ENCODE measurements at regions of chr17 and their contacts with region 1.

Region 1: GRCh38 chr17:7219812-7220581 is at the starts of genes ACADVL and DLG4:
- DNase-seq: peak; percentile 90
- H3K4me3 Mint-ChIP-seq: peak within 1 kb of the TSS; percentile 90
- H3K27ac Mint-ChIP-seq: peak within 1 kb of the TSS; percentile 92
- H3K4me1 Mint-ChIP-seq: peaks cover 53% of the 10 kb centered on the region
- H3K27me3 Mint-ChIP-seq: no peaks in the 10 kb centered on the region
- total RNA-seq, gene ACADVL: 332 to 340 TPM
- total RNA-seq, gene DLG4: 7.9 to 8.4 TPM

Region 2: GRCh38 chr17:7128160-7128559 is 91.8 kb before region 1 on chr17:
- CTCF ChIA-PET with region 1: no interaction called
- POLR2A ChIA-PET with region 1: no interaction called
- intact Hi-C with region 1: no loop called
- DNase-seq: no peak
- H3K4me3 Mint-ChIP-seq: no peak overlapping the region
- H3K27ac Mint-ChIP-seq: no peak overlapping the region
- H3K4me1 Mint-ChIP-seq: peaks cover 15% of the 10 kb centered on the region
- H3K27me3 Mint-ChIP-seq: no peaks in the 10 kb centered on the region

Region 3: DNA sequence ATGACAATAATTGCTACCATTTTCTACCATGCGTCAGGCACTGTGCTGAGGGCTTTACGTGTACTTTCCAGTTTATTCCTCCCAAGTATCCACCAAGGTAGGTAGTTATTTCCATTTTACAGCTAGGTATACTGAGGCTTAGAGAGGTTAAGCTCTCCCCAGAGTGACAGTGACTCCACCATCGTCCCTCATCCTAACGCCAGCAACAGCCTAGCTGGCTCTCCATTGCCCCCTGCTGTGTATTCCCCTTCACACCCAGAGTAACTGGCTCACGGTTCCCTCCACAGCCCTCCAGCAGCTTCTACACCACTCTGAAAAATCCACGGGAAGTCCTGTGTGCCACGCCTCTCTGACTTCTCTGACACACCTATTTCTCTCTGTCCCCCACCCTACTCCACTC is 33.8 kb before region 1 on chr17:
- CTCF ChIA-PET with region 1: no interaction called
- POLR2A ChIA-PET with region 1: no interaction called
- intact Hi-C with region 1: no loop called
- DNase-seq: peak; percentile 27
- H3K4me3 Mint-ChIP-seq: no peak overlapping the region
- H3K27ac Mint-ChIP-seq: no peak overlapping the region
- H3K4me1 Mint-ChIP-seq: no peaks in the 10 kb centered on the region
- H3K27me3 Mint-ChIP-seq: no peaks in the 10 kb centered on the region

Region 4: DNA sequence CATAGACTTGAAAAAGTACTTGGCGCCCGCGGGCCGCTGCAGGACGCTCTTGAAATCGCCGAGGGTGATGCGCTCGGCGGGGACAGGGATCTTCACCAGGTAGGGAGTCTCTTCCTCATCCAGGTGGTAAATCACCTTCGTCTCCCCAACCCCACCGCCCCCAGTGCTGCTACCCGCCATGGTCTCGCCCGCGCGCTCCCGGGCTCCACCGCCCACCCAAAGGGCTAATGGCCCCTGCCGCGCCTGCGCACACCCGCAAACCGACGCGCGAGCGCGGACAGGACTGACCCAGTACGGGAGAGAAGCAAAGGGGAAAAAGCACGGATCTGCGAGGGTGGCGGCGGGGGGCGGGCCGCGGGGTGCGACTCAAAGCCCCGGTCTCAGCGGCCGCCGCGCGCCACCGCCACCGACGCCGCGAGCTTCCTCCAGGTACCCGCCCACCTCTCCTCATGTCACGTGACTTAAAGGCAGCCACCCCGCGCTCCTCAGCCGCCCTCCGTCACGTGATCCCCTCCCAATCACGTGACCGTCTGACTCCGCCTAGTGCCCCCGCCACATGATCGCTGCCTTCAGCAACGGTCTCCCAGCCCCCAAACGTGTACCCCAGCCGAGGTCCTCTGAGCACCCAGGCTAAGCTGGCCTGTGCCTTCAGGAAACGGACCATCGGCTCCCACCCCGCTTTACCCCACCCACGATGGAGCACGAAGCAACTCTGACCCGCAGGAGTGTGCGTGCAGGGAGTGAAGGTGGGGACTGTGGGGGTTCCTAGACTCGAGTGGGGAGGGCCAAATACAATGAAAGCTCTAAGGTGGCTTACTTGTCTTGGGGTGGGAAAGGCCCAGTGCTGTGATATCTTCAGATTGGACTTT is 14.3 kb after region 1 on chr17 and contains the start of gene DVL2:
- CTCF ChIA-PET with region 1: interaction called, 34 read pairs
- POLR2A ChIA-PET with region 1: interaction called, 33 read pairs
- intact Hi-C with region 1: loop called (anchors 1 kb)
- DNase-seq: peak; percentile 96
- H3K4me3 Mint-ChIP-seq: peak within 1 kb of the TSS; percentile 97
- H3K27ac Mint-ChIP-seq: peak within 1 kb of the TSS; percentile 90
- H3K4me1 Mint-ChIP-seq: peaks cover 48% of the 10 kb centered on the region
- H3K27me3 Mint-ChIP-seq: peaks cover 2% of the 10 kb centered on the region
- total RNA-seq, gene DVL2: 44.7 to 48.2 TPM

Region 5: GRCh38 chr17:7239091-7240027 is 19.4 kb after region 1 on chr17 and contains the start of gene PHF23:
- CTCF ChIA-PET with region 1: interaction called, 34 read pairs
- POLR2A ChIA-PET with region 1: interaction called, 33 read pairs
- intact Hi-C with region 1: loop called (anchors 1 kb)
- DNase-seq: peak; percentile 99
- H3K4me3 Mint-ChIP-seq: peak within 1 kb of the TSS; percentile 94
- H3K27ac Mint-ChIP-seq: peak within 1 kb of the TSS; percentile 97
- H3K4me1 Mint-ChIP-seq: peaks cover 59% of the 10 kb centered on the region
- H3K27me3 Mint-ChIP-seq: peaks cover 4% of the 10 kb centered on the region
- total RNA-seq, gene PHF23: 24.0 to 28.7 TPM